Natural killer cell (primary cell): ENCODE measurements at regions of chr22 and their contacts with region 1.

Region 1: GRCh38 chr22:42780070-42780540 is 59.4 kb upstream of the A4GALT start:
- DNase-seq: peak in 1 of 2 donors; percentile 83
- ATAC-seq: peak; percentile 70 to 80 (median 76)
- H3K4me3 ChIP-seq: no peak overlapping the region
- H3K4me3 Mint-ChIP-seq: no peak overlapping the region
- H3K27ac ChIP-seq: no peak overlapping the region
- H3K27ac Mint-ChIP-seq: no peak overlapping the region
- H3K4me1 ChIP-seq: peaks cover 2% of the 10 kb centered on the region
- H3K4me1 Mint-ChIP-seq: no peaks in the 10 kb centered on the region
- H3K27me3 ChIP-seq: no peaks in the 10 kb centered on the region
- H3K27me3 Mint-ChIP-seq: no peaks in the 10 kb centered on the region
- CTCF ChIP-seq: peak; percentile 81

Region 2: DNA sequence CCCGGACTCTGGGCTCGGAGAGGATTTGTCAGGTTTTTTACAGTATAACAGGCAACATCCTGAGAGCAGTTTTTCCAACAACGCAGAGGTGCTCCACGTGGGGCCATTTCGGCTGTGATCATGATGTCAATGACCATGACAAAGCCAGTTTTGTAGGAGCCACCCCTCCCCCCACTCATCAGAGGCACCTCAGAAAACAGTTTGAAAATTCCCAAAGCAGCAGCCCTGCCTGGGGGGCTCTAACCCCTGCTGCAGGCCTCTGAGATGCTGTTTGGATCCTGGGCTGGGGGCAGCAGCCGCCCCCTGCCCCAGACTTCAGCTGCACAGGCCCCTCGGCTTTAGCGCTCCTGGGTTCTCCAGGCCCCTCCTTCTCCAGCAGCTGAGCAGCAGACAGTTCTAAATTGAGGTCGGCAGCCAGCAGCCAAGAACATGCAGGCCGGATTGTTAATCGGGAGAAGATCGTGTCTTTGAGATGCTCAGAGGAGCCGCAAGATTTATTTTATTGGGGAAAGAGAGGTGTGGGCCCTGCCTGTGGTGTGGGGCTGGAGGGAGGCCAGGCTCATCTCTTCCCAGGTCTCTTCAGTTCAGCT is 367.3 kb before region 1 on chr22:
- intact Hi-C with region 1: no loop called
- DNase-seq: no peak
- ATAC-seq: no peak
- H3K4me3 ChIP-seq: no peak overlapping the region
- H3K4me3 Mint-ChIP-seq: no peak overlapping the region
- H3K27ac ChIP-seq: no peak overlapping the region
- H3K27ac Mint-ChIP-seq: no peak overlapping the region
- H3K4me1 ChIP-seq: no peaks in the 10 kb centered on the region
- H3K4me1 Mint-ChIP-seq: peaks cover 0 to 4% of the 10 kb centered on the region in 2 donors
- H3K27me3 ChIP-seq: no peaks in the 10 kb centered on the region
- H3K27me3 Mint-ChIP-seq: no peaks in the 10 kb centered on the region
- CTCF ChIP-seq: no peak

Region 3: GRCh38 chr22:42820066-42820763 is 40.1 kb after region 1 on chr22:
- intact Hi-C with region 1: loop called (anchors 1 kb)
- DNase-seq: peak in 1 of 2 donors; percentile 57
- ATAC-seq: peak in 2 of 3 donors; percentile 42 to 46
- H3K4me3 ChIP-seq: no peak overlapping the region
- H3K4me3 Mint-ChIP-seq: no peak overlapping the region
- H3K27ac ChIP-seq: no peak overlapping the region
- H3K27ac Mint-ChIP-seq: peak overlapping the region in 1 of 2 donors; percentile 31
- H3K4me1 ChIP-seq: no peaks in the 10 kb centered on the region
- H3K4me1 Mint-ChIP-seq: peaks cover 13 to 15% of the 10 kb centered on the region in 2 donors
- H3K27me3 ChIP-seq: no peaks in the 10 kb centered on the region
- H3K27me3 Mint-ChIP-seq: no peaks in the 10 kb centered on the region
- CTCF ChIP-seq: peak; percentile 52

Region 4: GRCh38 chr22:42863349-42863961 is 83.3 kb after region 1 on chr22:
- intact Hi-C with region 1: loop called (anchors 1 kb)
- DNase-seq: no peak
- ATAC-seq: peak in 2 of 3 donors; percentile 18 to 38
- H3K4me3 ChIP-seq: no peak overlapping the region
- H3K4me3 Mint-ChIP-seq: no peak overlapping the region
- H3K27ac ChIP-seq: no peak overlapping the region
- H3K27ac Mint-ChIP-seq: peak overlapping the region in 1 of 2 donors; percentile 74
- H3K4me1 ChIP-seq: peaks cover 4% of the 10 kb centered on the region
- H3K4me1 Mint-ChIP-seq: peaks cover 8 to 20% of the 10 kb centered on the region in 2 donors
- H3K27me3 ChIP-seq: no peaks in the 10 kb centered on the region
- H3K27me3 Mint-ChIP-seq: no peaks in the 10 kb centered on the region
- CTCF ChIP-seq: no peak

Region 5: DNA sequence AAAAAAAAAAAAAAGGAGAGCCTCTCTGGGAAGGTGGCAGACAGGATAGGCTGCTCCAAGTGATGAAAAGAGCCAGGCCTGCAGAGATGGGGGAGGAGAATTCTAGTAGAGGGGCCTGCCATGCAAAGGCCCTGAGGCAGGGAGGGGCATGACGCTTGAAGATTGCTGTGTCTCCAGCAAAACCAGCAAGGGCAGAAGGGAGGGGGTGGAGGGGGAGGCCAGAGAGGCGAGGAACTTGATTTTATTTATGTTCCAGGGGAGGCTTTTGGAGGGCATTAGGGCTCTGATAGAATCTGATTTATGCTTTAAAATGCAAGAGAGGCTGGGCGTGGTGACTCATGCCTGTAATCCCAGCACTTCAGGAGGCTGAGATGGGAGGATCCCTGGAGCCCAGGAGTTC is 251.5 kb after region 1 on chr22:
- intact Hi-C with region 1: loop called (anchors 2 kb)
- DNase-seq: no peak
- ATAC-seq: no peak
- H3K4me3 ChIP-seq: no peak overlapping the region
- H3K4me3 Mint-ChIP-seq: no peak overlapping the region
- H3K27ac ChIP-seq: no peak overlapping the region
- H3K27ac Mint-ChIP-seq: no peak overlapping the region
- H3K4me1 ChIP-seq: peaks cover 5% of the 10 kb centered on the region
- H3K4me1 Mint-ChIP-seq: peaks cover 0 to 6% of the 10 kb centered on the region in 2 donors
- H3K27me3 ChIP-seq: no peaks in the 10 kb centered on the region
- H3K27me3 Mint-ChIP-seq: no peaks in the 10 kb centered on the region
- CTCF ChIP-seq: no peak

Region 6: DNA sequence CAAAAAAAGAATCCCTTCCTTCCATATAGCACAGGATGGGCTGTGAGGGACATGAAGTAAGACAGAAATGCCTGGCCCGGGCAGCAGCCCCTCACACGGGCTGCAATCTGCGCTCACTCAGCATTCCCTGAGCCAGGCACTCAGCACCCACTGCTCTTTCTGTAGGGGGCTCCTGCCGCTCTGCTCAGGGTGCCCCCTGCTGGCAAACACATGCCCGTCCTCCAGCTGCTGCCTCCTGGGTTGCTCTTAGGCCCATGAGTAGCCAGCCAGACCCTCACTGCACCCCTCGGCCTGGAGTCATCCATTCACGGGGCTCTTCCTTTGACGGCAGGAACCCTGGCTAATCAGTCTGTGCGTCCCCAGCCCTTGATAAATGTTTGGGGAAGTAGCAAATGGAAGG is 356.1 kb after region 1 on chr22:
- intact Hi-C with region 1: loop called (anchors 5 kb)
- DNase-seq: peak in 1 of 2 donors; percentile 66
- ATAC-seq: peak in 2 of 3 donors; percentile 73 to 74
- H3K4me3 ChIP-seq: no peak overlapping the region
- H3K4me3 Mint-ChIP-seq: no peak overlapping the region
- H3K27ac ChIP-seq: no peak overlapping the region
- H3K27ac Mint-ChIP-seq: no peak overlapping the region
- H3K4me1 ChIP-seq: no peaks in the 10 kb centered on the region
- H3K4me1 Mint-ChIP-seq: peaks cover 0 to 6% of the 10 kb centered on the region in 2 donors
- H3K27me3 ChIP-seq: no peaks in the 10 kb centered on the region
- H3K27me3 Mint-ChIP-seq: no peaks in the 10 kb centered on the region
- CTCF ChIP-seq: peak; percentile 43